Heart right ventricle (tissue), 16 donors: ENCODE measurements at regions of chr19 and their contacts with region 1.

Region 1: DNA sequence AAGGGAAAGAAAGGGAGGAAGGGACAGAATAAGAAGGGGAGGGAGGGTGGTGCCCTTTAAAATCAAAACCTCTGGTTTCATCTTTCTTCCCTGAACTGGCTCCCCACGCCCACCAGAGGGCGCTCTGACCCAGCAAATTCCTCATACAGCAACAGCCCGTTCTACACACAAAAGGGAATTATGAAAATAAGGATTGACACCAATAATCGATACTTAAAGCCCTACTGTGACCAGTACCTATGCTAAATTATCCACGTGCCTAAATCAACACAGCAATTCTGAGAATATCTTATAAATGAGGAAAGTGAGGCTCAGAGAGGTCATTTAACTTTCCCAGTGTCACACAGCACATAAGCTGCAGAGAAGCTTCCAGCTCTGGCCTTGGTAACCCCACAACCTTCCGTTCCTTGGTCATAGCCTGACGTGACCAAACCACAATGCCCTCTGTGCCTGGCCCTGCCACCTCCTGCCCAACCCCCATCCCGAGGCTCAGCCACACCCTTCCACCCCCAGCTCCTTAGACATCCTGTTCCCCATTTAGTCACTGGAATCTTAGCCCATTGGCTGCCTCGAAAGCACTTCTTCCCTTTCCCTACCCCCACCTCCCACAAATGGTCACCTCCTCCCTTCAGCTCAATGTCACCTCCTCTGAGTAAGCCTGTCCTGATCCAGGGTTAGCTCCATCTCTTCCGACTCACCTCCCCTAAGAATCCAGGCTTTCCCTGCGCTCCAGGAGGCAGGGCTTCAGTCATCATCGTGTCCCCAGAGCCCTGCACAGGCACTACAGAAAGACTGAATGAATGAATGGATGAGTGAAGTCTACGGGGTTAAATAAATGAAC is 34.2 kb upstream of the PNMA8B start:
- DNase-seq: peak; percentile 69 to 73
- ATAC-seq: peak; percentile 51 to 81 (median 70)
- H3K4me3 ChIP-seq: no peak overlapping the region
- H3K27ac ChIP-seq: no peak overlapping the region
- H3K4me1 ChIP-seq: peaks cover 0 to 13% (median 7%) of the 10 kb centered on the region in 9 donors
- H3K27me3 ChIP-seq: peaks cover 0 to 13% (median 7%) of the 10 kb centered on the region in 7 donors
- CTCF ChIP-seq: peak; percentile 83 to 96 (median 91)

Region 2: GRCh38 chr19:46542428-46543230 is 12.8 kb after region 1 on chr19:
- intact Hi-C with region 1: loop called in 1 of 10 experiments (anchors 2 kb)
- DNase-seq: peak; percentile 82 to 91
- ATAC-seq: peak; percentile 77 to 87 (median 86)
- H3K4me3 ChIP-seq: no peak overlapping the region
- H3K27ac ChIP-seq: no peak overlapping the region
- H3K4me1 ChIP-seq: peaks cover 0 to 10% (median 0%) of the 10 kb centered on the region in 9 donors
- H3K27me3 ChIP-seq: no peaks in the 10 kb centered on the region
- CTCF ChIP-seq: peak; percentile 86 to 94 (median 92)

Region 3: DNA sequence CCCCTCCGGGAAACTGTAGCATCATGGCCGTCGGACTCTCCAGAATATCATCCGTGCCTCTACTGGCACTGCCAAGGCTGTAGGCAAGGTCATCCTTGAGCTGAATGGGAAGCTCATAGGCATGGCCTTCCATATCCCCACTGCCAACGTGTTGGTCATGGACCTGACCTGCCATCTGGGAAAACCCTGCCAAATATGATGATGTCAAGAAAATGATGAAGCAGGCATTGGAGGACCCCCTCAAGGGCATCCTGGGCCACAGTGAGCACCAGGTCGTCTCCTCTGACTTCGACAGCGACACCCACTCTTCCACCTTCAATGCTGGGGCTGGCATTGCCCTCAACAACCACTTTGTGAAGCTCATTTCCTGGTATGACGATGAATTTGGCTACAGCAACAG is 29.4 kb after region 1 on chr19:
- intact Hi-C with region 1: no loop called
- DNase-seq: no peak
- ATAC-seq: no peak
- H3K4me3 ChIP-seq: no peak overlapping the region
- H3K27ac ChIP-seq: no peak overlapping the region
- H3K4me1 ChIP-seq: peaks cover 0 to 7% (median 0%) of the 10 kb centered on the region in 9 donors
- H3K27me3 ChIP-seq: no peaks in the 10 kb centered on the region
- CTCF ChIP-seq: no peak

Region 4: GRCh38 chr19:46571531-46571930 is 41.7 kb after region 1 on chr19:
- intact Hi-C with region 1: no loop called
- DNase-seq: no peak
- ATAC-seq: no peak
- H3K4me3 ChIP-seq: no peak overlapping the region
- H3K27ac ChIP-seq: no peak overlapping the region
- H3K4me1 ChIP-seq: no peaks in the 10 kb centered on the region
- H3K27me3 ChIP-seq: no peaks in the 10 kb centered on the region
- CTCF ChIP-seq: no peak

Region 5: DNA sequence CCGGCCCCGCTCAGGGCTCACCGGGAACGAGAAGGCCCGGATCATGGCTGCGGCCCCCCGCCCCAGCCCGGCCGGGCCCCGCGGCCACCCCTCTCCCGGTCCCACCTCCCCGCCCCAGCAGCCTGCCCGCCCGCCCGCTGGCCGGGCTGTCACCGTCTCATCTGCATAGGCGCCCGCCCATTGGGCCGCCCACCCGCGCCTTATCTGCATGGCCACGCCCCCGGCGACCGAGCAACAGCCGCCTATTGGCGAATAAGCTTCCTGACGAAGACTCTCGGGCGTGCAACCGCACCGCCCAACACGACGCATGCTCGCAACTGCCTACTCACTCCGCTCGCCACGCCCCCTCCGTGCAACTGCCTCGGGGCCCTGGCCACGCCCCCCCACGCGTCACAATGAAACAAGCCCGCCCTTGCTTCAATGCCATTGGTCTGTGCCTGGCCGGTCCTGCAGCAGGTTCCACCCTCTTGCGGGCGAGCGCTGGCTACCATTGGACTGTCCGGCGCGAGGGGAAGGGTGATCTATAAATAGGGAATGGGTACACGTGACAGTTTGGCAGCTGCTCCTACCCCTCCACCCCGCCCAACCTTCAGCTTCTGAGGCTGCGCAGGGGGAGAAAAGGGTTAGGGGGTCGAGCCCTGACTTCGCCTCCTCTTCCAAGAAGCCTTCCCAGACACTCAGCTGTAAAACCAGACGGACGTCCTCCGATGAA is 131.3 kb after region 1 on chr19 and contains the start of gene DACT3:
- intact Hi-C with region 1: loop called in 8 of 10 experiments (anchors 1 to 10 kb)
- DNase-seq: peak; percentile 100
- ATAC-seq: peak; percentile 93 to 98 (median 96)
- H3K4me3 ChIP-seq: peak within 1 kb of the TSS; percentile 46 to 87 (median 68)
- H3K27ac ChIP-seq: peak within 1 kb of the TSS; percentile 2 to 88 (median 74)
- H3K4me1 ChIP-seq: peaks cover 3 to 32% (median 20%) of the 10 kb centered on the region in 9 donors
- H3K27me3 ChIP-seq: peaks cover 0 to 41% (median 0%) of the 10 kb centered on the region in 7 donors
- CTCF ChIP-seq: peak in 2 of 9 donors; percentile 7 to 20
- total RNA-seq, gene DACT3: 6.9 to 29.3 (median 14.9) TPM